ENCODE measurements at regions of chr16 and their contacts with region 1.

Region 1: DNA sequence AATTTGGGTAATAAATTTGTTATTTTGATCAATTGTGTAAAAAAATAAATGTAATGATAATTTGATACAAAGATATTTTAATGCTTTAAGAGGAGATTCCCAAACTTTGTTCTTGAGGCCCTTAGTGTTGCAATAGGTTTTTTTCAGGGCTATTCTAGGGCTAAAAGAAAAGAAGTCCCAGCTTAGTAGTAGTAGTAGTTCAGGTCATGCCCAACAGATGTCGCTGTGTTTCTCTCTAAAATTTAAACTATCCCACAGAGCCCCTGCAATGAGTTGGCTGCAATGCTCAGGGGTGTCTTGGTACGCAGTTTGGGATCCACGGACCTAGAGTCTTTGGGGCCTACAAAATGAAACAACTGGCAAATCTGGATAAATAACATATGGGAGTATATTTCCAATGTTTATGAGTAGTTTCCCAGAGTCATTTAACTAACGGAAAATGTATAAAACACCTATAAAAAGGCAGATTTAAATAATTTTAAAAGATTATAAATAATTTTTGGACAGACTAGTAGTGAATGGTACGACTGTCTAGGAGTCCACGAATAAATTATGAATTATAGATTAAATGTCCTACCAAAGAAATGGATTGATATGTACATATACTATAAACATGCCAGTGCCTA is 228.4 kb upstream of the PMFBP1 start:
- DNase-seq: peak in 4 of 10 donors; percentile 6 to 60 (median 30)

Region 2: GRCh38 chr16:72107371-72107770 is 293.0 kb before region 1 on chr16:
- intact Hi-C with region 1: no loop called
- DNase-seq: no peak

Region 3: GRCh38 chr16:72355561-72355960 is 44.8 kb before region 1 on chr16:
- intact Hi-C with region 1: no loop called
- DNase-seq: no peak

Region 4: DNA sequence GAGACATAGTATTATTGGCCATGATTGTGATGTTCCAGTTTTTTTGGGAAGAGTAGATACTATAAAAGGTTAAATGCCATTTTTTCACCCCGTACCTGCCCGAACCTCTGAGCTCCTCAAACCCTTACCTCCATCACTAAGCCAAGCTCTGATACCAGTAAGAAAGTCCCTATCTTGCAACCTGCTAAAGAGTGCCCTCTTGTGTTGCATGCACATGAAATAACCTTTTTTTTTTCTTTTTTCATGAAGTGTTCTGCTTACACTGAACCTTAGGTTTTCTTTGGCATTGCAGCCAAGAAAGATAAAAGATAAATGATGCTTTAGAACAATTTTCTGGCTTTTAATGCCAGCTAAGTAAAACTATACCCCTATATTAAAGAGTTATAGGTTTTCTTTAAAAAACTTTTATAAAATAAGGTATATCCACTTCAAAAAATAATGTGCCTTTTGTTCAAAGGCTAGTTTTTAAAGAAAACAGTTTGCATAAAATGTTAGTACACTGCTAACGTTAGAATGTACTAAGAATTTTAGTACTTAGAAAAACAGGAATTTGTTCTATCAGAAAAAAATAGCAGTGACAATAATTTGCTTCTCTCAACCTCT is 66.9 kb after region 1 on chr16:
- intact Hi-C with region 1: loop called (anchors 5 kb)
- DNase-seq: no peak

Measured in posterior cingulate gyrus (tissue), 11 donors.